Posterior cingulate gyrus (tissue), 11 donors: ENCODE measurements at regions of chr1 and their contacts with region 1.

Region 1: DNA sequence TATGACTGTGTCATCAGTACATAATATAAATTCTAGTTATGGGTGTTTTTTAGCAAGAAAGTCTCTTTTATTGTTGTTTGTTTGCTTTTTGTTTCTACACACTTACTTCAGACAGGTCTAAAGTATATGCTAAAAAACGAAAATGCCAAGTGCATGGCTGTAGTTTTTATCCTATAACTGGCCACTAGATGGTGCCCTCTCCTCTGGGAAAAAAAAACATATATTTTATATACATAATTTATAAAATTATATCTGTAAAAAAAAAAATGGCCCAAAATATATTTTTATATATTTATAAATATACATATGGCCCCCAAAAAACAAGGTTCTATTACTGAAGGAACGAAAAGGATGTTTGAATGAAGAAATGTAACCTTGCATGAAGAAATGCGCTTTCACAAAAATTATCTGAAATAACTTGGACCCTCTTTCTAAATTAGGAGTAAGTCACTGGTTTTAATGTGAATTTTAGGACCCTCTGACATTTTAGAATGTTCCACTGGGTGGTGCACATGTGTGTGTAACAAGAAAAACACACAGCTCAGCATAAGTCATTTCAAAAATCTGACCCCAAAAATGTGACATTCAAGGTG is 93.5 kb downstream of the TTLL7 start:
- DNase-seq: no peak

Region 2: DNA sequence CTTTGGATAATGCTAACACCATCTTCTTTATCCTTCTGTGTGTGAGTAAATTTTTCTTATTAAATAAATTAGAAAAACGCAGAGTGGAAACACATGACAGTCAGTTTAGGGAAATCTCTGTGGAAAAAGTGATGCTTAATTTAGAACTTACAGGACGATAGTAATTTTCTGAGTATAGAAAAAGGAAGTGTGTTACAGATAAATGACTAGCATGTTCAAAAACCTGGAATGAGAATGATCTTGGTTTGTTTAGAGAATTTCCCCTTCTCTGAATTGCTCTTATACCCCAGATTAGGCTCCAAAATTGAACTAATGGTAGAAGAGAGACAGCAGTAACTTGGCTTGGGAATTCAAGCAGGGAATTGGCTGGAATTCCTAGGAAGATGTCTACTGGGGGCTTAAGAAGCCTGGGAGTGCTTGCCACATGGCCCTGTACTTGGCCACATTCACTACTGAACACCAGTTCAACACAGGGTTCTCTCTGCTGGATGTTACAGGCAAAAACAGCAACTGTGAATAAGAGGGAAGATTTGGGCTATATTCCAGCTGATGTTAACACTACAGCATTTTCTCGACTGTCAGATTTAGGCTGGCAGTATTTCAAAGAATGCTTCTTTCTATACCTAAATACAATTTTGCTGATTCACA is 910.7 kb before region 1 on chr1:
- intact Hi-C with region 1: no loop called
- DNase-seq: no peak

Region 3: GRCh38 chr1:83776913-83777757 is 128.3 kb before region 1 on chr1:
- intact Hi-C with region 1: no loop called
- DNase-seq: no peak

Region 4: GRCh38 chr1:84122780-84123382 is 217.5 kb after region 1 on chr1:
- intact Hi-C with region 1: loop called (anchors 2 kb)
- DNase-seq: peak in 8 of 10 donors; percentile 35 to 86 (median 60)

Region 5: DNA sequence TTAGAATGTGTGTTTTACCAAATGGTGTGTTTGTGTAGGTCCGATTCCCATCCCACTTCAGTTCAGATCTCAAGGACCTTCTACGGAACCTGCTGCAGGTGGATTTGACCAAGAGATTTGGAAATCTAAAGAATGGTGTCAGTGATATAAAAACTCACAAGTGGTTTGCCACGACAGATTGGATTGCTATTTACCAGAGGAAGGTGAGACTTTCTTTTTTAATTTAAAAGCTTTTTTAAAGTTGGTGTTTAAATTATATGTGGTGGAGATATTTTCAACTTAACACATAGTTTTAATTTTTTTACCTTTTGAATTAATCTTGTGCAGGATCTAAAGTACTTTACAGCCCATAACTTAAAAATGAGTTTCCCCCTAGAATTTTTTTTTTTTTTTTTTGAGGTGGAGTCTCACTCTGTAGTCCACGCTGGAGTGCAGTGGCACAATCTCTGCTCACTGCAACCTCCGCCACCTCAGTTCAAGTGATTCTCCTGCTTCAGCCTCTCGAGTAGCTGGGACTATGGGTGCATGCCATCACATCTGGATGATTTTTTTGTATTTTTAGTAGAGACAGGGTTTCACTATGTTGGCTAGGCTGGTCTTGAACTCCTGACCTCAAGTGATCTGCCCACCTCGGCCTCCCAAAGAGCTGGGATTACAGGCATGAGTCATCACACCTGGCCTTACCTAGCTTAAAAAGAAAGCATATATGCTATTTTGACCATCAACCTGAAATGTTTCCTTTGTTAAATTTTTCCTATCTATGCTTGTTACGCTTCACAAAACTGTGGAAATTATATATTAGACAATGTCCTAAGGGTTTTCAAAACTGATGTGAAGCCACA is 308.9 kb after region 1 on chr1:
- intact Hi-C with region 1: no loop called
- DNase-seq: no peak